Pancreas (tissue), 10 donors: ENCODE measurements at regions of chr2 and their contacts with region 1.

Region 1: DNA sequence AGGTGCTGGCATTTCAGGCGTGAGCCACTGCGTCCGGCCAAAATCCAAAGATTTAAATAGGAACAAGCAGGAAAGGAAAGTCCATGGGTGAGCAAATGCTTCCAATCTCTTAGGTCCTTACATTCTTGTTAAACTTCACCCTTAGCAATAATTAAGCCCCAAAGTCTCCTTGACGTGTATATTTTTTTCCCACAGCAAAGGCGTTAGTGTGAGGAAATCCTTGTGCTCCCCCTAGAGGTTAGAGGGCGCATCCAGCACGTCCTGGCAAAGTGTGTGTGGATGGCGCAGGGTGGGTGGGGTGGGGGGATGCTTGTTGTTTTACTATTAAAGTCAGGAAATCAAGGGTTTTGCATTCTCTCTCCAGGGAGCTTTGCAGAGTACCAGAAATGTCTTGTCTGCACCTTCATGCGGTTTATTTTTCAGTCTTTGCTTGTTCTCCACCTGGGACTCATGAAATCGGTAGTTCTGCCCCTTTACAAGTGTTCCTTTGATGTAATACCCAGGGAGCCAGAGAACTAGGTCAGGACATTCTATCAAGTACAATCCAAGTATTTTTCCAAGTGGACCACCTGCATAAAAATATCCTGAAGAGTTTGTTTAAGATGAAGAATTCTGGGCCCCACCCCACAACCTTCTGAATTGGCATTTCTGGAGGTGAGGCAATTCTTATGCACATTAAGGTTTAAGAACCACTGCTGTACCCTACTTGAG is 22.2 kb upstream of the ITSN2 start:
- DNase-seq: peak in 5 of 6 donors; percentile 41 to 64 (median 43)
- ATAC-seq: peak; percentile 89 to 98 (median 96)
- H3K4me3 ChIP-seq: no peak overlapping the region
- H3K27ac ChIP-seq: no peak overlapping the region
- H3K4me1 ChIP-seq: no peaks in the 10 kb centered on the region
- H3K27me3 ChIP-seq: no peaks in the 10 kb centered on the region
- CTCF ChIP-seq: peak; percentile 56 to 77 (median 62)

Region 2: GRCh38 chr2:24209389-24210105 is 173.0 kb before region 1 on chr2:
- intact Hi-C with region 1: no loop called
- DNase-seq: no peak
- ATAC-seq: no peak
- H3K4me3 ChIP-seq: no peak overlapping the region
- H3K27ac ChIP-seq: no peak overlapping the region
- H3K4me1 ChIP-seq: no peaks in the 10 kb centered on the region
- H3K27me3 ChIP-seq: no peaks in the 10 kb centered on the region
- CTCF ChIP-seq: no peak

Region 3: DNA sequence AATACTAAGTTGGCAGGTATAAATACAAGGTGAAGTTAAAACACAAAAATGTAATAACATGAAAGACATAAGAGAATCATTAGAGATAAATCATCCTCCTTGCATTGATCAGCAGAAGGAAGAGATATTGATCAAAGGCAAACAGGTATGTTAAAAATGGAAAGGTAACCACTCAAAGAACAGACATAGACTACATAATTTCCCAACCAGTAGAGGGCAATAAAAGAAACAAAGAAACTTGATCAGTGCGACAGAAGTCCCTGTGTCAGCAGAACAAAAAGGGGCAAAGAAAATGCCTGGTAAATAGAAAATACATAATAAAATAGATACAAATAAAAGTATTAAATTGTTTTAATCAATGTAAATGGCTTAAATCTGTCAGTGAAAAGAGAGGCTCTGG is 154.0 kb before region 1 on chr2:
- intact Hi-C with region 1: loop called in 1 of 3 experiments (anchors 10 kb)
- DNase-seq: no peak
- ATAC-seq: peak in 3 of 4 donors; percentile 53 to 73 (median 70)
- H3K4me3 ChIP-seq: no peak overlapping the region
- H3K27ac ChIP-seq: no peak overlapping the region
- H3K4me1 ChIP-seq: no peaks in the 10 kb centered on the region
- H3K27me3 ChIP-seq: no peaks in the 10 kb centered on the region
- CTCF ChIP-seq: peak in 2 of 4 donors; percentile 14 to 17